Breast epithelium (tissue), 4 donors: ENCODE measurements at regions of chr11 and their contacts with region 1.

Region 1: GRCh38 chr11:2092956-2093412 is 46.2 kb downstream of the IGF2 start:
- DNase-seq: peak; percentile 84 to 96
- H3K4me3 ChIP-seq: no peak overlapping the region
- H3K27ac ChIP-seq: peak overlapping the region in 1 of 2 donors; percentile 68
- H3K4me1 ChIP-seq: peaks cover 4 to 6% of the 10 kb centered on the region in 2 donors
- H3K27me3 ChIP-seq: peaks cover 0 to 57% of the 10 kb centered on the region in 2 donors
- CTCF ChIP-seq: no peak
- POLR2A ChIP-seq: no peak

Region 2: GRCh38 chr11:2208691-2209369 is 115.8 kb after region 1 on chr11:
- intact Hi-C with region 1: no loop called
- DNase-seq: peak; percentile 57 to 68
- H3K4me3 ChIP-seq: peak overlapping the region in 1 of 3 donors; percentile 37
- H3K27ac ChIP-seq: peak overlapping the region in 1 of 2 donors; percentile 61
- H3K4me1 ChIP-seq: peaks cover 7 to 10% of the 10 kb centered on the region in 2 donors
- H3K27me3 ChIP-seq: no peaks in the 10 kb centered on the region
- CTCF ChIP-seq: peak; percentile 13 to 55 (median 35)
- POLR2A ChIP-seq: no peak

Region 3: GRCh38 chr11:3126207-3126862 is 1033.4 kb after region 1 on chr11:
- intact Hi-C with region 1: loop called (anchors 5 kb)
- DNase-seq: peak; percentile 76 to 94
- H3K4me3 ChIP-seq: peak overlapping the region in 2 of 3 donors; percentile 20 to 48
- H3K27ac ChIP-seq: peak overlapping the region; percentile 87 to 95
- H3K4me1 ChIP-seq: peaks cover 29 to 42% of the 10 kb centered on the region in 2 donors
- H3K27me3 ChIP-seq: no peaks in the 10 kb centered on the region
- CTCF ChIP-seq: no peak
- POLR2A ChIP-seq: no peak